ENCODE measurements at regions of chr14 and their contacts with region 1.

Region 1: GRCh38 chr14:52695481-52696091 is at the start of gene ERO1A:
- DNase-seq: peak; percentile 84
- H3K4me3 Mint-ChIP-seq: peak within 1 kb of the TSS; percentile 97
- H3K27ac Mint-ChIP-seq: peak within 1 kb of the TSS; percentile 92
- H3K4me1 Mint-ChIP-seq: peaks cover 28% of the 10 kb centered on the region
- H3K27me3 Mint-ChIP-seq: no peaks in the 10 kb centered on the region
- CTCF ChIP-seq: no peak
- total RNA-seq, gene ERO1A: 52.0 and 55.5 TPM in 2 replicates

Region 2: DNA sequence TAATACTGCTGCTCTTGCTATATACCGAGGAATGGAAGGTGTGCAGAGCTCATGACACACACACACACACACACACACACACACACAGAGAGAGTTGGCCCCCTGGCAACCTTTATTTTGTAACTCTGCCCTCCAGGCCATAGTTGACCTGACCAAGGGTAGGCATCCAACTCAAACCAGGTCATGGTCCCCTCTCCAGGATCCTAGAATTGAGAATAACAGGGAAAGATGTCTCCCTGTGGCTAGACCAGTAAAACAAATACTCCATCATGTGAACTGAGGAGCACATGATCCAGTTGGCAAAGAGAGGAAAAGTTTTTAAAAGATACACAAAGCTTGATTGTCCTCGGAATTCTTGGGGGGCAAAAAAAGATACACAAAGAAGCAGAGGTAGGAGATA is 11.5 kb before region 1 on chr14:
- CTCF ChIA-PET with region 1: interaction called, 3 read pairs
- POLR2A ChIA-PET with region 1: interaction called, 22 read pairs
- intact Hi-C with region 1: no loop called
- DNase-seq: no peak
- H3K4me3 Mint-ChIP-seq: no peak overlapping the region
- H3K27ac Mint-ChIP-seq: no peak overlapping the region
- H3K4me1 Mint-ChIP-seq: peaks cover 12% of the 10 kb centered on the region
- H3K27me3 Mint-ChIP-seq: no peaks in the 10 kb centered on the region
- CTCF ChIP-seq: no peak

Region 3: DNA sequence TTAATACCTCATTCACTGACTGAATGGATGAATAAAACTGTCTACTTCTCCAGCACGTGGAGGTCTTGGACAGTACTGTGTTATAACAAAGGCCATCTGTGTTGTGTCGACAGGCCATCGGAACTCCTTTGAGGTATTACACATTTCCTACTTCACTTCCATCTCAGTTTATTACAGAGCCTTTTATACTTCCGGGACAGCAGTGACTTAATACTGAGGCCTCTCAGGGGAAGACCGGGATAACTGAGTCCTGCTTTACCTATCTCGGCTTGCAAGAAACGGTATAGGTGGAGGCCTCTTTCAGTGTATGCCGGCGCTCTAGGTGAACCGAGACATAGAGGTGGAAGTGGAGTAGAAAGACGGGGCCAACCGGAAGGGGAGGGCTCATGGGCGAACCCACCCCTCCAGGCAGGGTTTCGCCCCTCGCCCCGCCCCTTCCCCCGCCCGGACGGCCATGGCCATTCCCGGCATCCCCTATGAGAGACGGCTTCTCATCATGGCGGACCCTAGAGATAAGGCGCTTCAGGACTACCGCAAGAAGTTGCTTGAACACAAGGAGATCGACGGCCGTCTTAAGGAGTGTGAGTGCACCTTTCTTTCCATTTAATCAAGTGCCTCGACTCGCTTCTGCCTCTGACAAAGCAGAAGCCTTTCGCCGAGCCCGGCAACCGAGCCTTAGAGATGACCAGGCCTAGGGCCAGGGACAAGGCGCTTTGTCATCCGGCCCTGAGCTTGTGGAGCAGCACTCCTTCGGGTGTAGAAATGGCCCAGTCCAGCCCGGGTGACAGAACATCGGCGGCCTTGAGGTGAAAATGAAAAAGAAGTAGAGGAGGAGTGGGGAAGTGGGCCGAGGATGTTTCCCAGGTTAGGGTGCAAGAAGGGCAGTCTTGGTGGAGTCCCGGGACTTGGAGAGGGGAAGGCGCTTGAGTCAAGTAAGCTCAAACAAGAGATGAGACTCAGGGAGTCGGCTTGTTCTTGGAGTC is 11.4 kb after region 1 on chr14 and contains the start of gene PSMC6:
- CTCF ChIA-PET with region 1: no interaction called
- POLR2A ChIA-PET with region 1: interaction called, 68 read pairs
- intact Hi-C with region 1: no loop called
- DNase-seq: peak; percentile 95
- H3K4me3 Mint-ChIP-seq: peak within 1 kb of the TSS; percentile 98
- H3K27ac Mint-ChIP-seq: peak within 1 kb of the TSS; percentile 99
- H3K4me1 Mint-ChIP-seq: peaks cover 22% of the 10 kb centered on the region
- H3K27me3 Mint-ChIP-seq: no peaks in the 10 kb centered on the region
- CTCF ChIP-seq: no peak
- total RNA-seq, gene PSMC6: 83.9 and 90.0 TPM in 2 replicates

Region 4: GRCh38 chr14:54267172-54267571 is 1571.6 kb after region 1 on chr14:
- CTCF ChIA-PET with region 1: no interaction called
- POLR2A ChIA-PET with region 1: no interaction called
- intact Hi-C with region 1: no loop called
- DNase-seq: no peak
- H3K4me3 Mint-ChIP-seq: no peak overlapping the region
- H3K27ac Mint-ChIP-seq: no peak overlapping the region
- H3K4me1 Mint-ChIP-seq: no peaks in the 10 kb centered on the region
- H3K27me3 Mint-ChIP-seq: no peaks in the 10 kb centered on the region
- CTCF ChIP-seq: no peak